IMR-90 (cell line): ENCODE measurements at regions of chr16 and their contacts with region 1.

Region 1: DNA sequence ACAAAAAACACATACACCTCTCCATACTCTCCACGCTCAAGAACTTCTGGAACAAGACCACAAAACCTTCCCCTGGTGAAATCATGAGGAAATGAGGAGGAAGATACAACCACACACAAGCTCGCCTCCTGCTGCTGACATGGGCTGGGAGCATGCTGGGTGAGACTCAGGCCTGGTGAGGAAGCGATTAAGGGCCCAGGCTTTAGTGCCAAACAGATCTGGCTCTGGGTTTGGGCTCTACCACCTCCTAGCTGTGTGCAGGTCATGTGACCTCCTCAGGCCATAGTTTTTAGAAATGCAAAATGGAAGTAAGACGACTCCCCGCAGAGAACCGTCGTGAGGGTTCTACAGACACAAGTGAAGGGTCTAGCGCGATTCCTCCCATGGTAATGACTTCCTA is 41.3 kb downstream of the VAC14 start:
- DNase-seq: no peak
- ATAC-seq: no peak
- H3K4me3 ChIP-seq: no peak overlapping the region
- H3K27ac ChIP-seq: peak overlapping the region; percentile 90
- H3K4me1 ChIP-seq: peaks cover 20% of the 10 kb centered on the region
- H3K27me3 ChIP-seq: no peaks in the 10 kb centered on the region
- CTCF ChIP-seq: no peak
- POLR2A ChIP-seq: no peak
- RAD21 ChIP-seq: no peak

Region 2: GRCh38 chr16:70520612-70521297 is 238.9 kb before region 1 on chr16:
- CTCF ChIA-PET with region 1: no interaction called
- POLR2A ChIA-PET with region 1: no interaction called
- dilution Hi-C with region 1: no loop called
- in situ Hi-C with region 1: no loop called
- intact Hi-C with region 1: no loop called
- DNase-seq: peak; percentile 74
- ATAC-seq: no peak
- H3K4me3 ChIP-seq: no peak overlapping the region
- H3K27ac ChIP-seq: no peak overlapping the region
- H3K4me1 ChIP-seq: no peaks in the 10 kb centered on the region; the same call in 1 of the 2 replicates
- H3K27me3 ChIP-seq: no peaks in the 10 kb centered on the region
- CTCF ChIP-seq: no peak
- POLR2A ChIP-seq: no peak
- RAD21 ChIP-seq: no peak

Region 3: DNA sequence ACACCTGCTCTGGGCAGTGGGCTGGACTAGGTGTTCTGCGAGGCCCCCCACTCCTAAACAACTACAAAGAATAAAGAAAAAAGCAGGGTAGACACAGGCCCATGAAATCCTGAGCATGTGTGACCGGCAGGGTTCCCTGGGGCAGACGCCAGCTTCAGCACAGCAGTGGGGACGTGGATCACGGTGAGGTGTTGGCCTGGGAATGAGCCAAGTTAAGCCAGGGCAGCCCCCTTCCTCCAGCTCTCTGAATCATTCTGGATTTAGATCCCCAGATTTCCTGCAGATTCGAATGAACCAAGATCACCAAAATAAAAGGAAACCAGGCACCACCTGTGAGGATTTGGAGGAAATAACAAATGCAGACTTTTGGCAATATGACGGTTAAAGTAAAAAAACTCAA is 93.3 kb before region 1 on chr16:
- CTCF ChIA-PET with region 1: no interaction called
- POLR2A ChIA-PET with region 1: interaction called, 13 read pairs
- dilution Hi-C with region 1: loop called (anchors 10 kb)
- in situ Hi-C with region 1: no loop called
- intact Hi-C with region 1: no loop called
- DNase-seq: no peak
- ATAC-seq: no peak
- H3K4me3 ChIP-seq: no peak overlapping the region
- H3K27ac ChIP-seq: no peak overlapping the region
- H3K4me1 ChIP-seq: peaks cover 3% of the 10 kb centered on the region; the same call in 1 of the 2 replicates
- H3K27me3 ChIP-seq: no peaks in the 10 kb centered on the region
- CTCF ChIP-seq: no peak
- POLR2A ChIP-seq: no peak
- RAD21 ChIP-seq: no peak

Region 4: GRCh38 chr16:71260995-71261394 is 501.3 kb after region 1 on chr16:
- CTCF ChIA-PET with region 1: no interaction called
- POLR2A ChIA-PET with region 1: no interaction called
- dilution Hi-C with region 1: no loop called
- in situ Hi-C with region 1: no loop called
- intact Hi-C with region 1: no loop called
- DNase-seq: no peak
- ATAC-seq: no peak
- H3K4me3 ChIP-seq: no peak overlapping the region
- H3K27ac ChIP-seq: no peak overlapping the region
- H3K4me1 ChIP-seq: no peaks in the 10 kb centered on the region
- H3K27me3 ChIP-seq: no peaks in the 10 kb centered on the region
- CTCF ChIP-seq: no peak
- POLR2A ChIP-seq: no peak
- RAD21 ChIP-seq: no peak